Right ventricle myocardium inferior (tissue), 1 donor: ENCODE measurements at regions of chr3 and their contacts with region 1.

Region 1: DNA sequence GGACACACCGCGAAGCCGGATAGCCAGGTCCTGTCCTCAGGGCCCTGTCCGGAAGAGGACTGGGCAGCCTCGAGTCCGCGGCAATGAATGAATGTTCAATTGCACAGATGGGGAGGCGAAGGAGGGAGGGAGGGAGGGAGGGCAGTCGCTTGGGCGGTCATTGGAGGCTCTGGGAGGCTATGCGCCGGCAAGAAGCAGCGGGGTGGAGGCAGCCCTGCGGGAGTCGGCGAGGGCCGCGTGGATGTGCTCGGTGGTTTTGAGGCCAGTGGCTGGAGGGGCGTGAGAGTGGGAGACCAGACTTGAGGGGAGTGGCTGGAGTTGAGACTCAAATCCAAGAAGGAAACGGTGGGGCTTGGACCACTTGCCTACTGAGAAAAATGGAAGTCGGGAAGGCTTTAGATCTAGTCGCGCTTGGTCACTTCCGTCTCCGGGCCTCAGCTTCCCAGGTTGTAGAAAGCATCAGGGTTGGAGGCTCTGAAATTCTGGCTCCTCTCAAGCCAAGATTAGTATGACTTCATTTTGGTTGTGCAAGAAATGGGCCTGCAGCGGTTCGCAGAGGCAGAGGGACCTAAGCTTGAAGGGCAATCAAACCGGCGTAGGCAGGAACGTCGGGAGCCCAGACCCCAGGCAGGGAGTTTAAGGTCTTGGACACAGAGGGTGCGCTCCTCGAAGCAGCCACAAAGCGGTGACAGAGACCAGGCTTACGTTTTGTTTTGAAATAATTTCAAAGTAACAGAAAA is 21.1 kb upstream of the PLXND1 start:
- DNase-seq: peak; percentile 83
- ATAC-seq: peak; percentile 42

Region 2: GRCh38 chr3:129490242-129491045 is 137.2 kb before region 1 on chr3:
- intact Hi-C with region 1: loop called (anchors 1 kb)
- DNase-seq: peak; percentile 85
- ATAC-seq: peak; percentile 95

Region 3: DNA sequence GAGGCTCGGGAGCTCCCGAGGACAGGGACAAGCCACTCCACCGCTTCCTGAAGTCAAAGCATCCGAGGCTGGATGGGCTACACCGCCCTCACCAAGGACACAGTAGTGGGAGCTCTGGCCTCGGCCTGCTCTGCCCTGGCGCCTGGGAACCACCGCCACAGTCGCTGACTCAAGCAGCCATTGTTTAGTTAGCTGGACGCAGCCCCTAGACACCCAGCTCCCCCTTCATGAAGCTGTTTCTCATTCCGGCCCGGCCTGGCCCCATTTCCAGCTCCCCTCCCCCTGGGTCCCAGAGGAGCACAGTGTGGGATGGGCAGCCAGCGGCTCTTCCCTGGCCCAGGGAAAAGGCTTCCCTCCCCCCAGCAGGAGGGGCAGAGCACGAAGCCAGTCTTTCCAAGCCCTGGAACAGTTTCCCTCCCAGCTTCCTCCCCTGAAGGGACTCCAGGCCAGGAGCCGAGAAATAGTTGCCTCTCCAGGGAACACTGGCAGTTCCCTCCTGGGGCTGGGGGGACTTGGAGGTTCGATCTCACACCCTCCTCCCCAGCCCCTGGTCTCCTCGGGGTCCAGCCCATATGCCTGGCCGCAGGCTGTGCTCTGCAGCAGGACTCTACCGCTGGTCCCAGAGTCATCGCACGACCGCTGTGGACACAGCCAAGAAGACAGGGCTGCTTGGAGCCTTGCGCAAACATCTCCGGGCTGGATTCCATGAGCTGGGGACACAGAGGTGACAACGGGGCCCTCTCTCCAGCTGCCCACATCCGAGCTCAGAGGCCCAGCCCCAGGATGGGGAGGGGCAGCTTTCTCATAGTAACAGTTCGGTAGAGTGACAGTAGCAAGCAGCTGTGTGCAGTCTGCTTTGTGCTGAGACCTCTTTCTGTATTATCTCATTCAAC is 31.2 kb before region 1 on chr3:
- intact Hi-C with region 1: loop called (anchors 2 kb)
- DNase-seq: peak; percentile 90
- ATAC-seq: peak; percentile 86

Region 4: DNA sequence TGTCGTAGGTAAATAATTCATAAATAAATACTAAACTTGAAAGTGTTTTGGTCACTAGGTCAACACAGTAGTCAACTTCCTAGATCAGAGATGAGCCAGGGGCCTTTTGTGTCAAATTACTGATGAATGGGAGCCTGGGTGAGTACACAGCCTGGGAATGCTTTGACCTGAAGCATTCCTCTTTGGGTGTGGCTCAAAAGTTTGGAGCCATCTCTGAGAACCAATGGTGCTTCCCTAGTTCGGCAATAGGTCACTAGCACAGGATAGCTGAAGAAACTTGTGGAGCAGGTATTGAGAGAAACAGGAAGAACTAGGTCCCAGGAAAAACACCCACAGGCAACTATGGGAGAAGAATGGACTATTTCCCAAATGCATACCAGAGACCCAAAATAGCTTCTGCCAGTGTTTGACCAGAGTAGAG is 35.4 kb after region 1 on chr3:
- intact Hi-C with region 1: no loop called
- DNase-seq: no peak
- ATAC-seq: no peak

Region 5: GRCh38 chr3:129801354-129801753 is 173.8 kb after region 1 on chr3:
- intact Hi-C with region 1: no loop called
- DNase-seq: no peak
- ATAC-seq: no peak

Region 6: DNA sequence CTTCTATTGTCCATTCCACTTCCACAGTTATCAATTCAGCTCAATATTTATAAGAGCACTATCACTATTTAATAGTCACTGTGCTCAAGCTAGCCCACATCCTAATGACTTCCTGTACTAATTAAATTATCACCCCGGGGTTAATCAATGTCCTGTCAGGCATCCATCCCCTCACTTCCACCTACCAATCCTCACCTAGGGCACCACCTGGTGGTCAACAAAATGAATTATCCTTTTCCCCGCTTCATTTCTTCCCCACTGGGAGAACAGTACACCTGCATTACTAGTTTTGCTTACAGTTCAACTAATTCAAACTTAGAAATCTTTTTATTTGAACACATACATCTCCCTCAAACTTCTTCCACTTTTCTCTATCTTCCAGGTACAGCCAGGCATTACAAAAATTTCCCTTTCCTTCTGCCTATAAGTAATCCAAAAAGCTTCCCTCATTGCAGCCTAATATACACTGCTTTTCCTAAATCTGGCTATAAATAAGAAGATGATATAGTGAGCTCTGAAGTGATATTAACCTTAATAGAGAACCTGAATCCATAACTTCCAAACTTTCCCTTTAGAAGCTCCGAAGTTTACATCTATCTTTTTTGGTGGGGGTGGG is 197.4 kb after region 1 on chr3:
- intact Hi-C with region 1: loop called (anchors 2 kb)
- DNase-seq: no peak
- ATAC-seq: no peak